CD14-positive monocyte (primary cell): ENCODE measurements at regions of chr4 and their contacts with region 1.

Region 1: GRCh38 chr4:25234390-25235370 is 847 bp downstream of the PI4K2B start:
- DNase-seq: peak; percentile 69 to 87 (median 81)
- H3K4me3 ChIP-seq: peak overlapping the region; percentile 82 to 99 (median 84)
- H3K4me3 Mint-ChIP-seq: peak overlapping the region; percentile 87 to 95
- H3K27ac ChIP-seq: peak overlapping the region; percentile 75 to 92
- H3K27ac Mint-ChIP-seq: peak overlapping the region; percentile 74 to 97 (median 92)
- H3K4me1 ChIP-seq: peaks cover 18 to 35% of the 10 kb centered on the region in 2 donors
- H3K4me1 Mint-ChIP-seq: peaks cover 28% of the 10 kb centered on the region
- H3K27me3 ChIP-seq: no peaks in the 10 kb centered on the region
- H3K27me3 Mint-ChIP-seq: peaks cover 0 to 5% (median under 1%) of the 10 kb centered on the region in 3 donors
- CTCF ChIP-seq: peak; percentile 74

Region 2: GRCh38 chr4:24584175-24584850 is 650.4 kb before region 1 on chr4 and contains the start of gene DHX15:
- intact Hi-C with region 1: loop called in 1 of 2 experiments (anchors 5 kb)
- DNase-seq: peak; percentile 98 to 99 (median 99)
- H3K4me3 ChIP-seq: peak within 1 kb of the TSS; percentile 80 to 88 (median 83)
- H3K4me3 Mint-ChIP-seq: peak within 1 kb of the TSS; percentile 96 to 99
- H3K27ac ChIP-seq: peak within 1 kb of the TSS; percentile 77 to 97
- H3K27ac Mint-ChIP-seq: peak within 1 kb of the TSS; percentile 91 to 99 (median 96)
- H3K4me1 ChIP-seq: peaks cover 19 to 26% of the 10 kb centered on the region in 2 donors
- H3K4me1 Mint-ChIP-seq: peaks cover 33% of the 10 kb centered on the region
- H3K27me3 ChIP-seq: no peaks in the 10 kb centered on the region
- H3K27me3 Mint-ChIP-seq: no peaks in the 10 kb centered on the region
- CTCF ChIP-seq: no peak
- polyA plus RNA-seq, gene DHX15: 27.2 to 77.7 (median 37.5) TPM

Region 3: DNA sequence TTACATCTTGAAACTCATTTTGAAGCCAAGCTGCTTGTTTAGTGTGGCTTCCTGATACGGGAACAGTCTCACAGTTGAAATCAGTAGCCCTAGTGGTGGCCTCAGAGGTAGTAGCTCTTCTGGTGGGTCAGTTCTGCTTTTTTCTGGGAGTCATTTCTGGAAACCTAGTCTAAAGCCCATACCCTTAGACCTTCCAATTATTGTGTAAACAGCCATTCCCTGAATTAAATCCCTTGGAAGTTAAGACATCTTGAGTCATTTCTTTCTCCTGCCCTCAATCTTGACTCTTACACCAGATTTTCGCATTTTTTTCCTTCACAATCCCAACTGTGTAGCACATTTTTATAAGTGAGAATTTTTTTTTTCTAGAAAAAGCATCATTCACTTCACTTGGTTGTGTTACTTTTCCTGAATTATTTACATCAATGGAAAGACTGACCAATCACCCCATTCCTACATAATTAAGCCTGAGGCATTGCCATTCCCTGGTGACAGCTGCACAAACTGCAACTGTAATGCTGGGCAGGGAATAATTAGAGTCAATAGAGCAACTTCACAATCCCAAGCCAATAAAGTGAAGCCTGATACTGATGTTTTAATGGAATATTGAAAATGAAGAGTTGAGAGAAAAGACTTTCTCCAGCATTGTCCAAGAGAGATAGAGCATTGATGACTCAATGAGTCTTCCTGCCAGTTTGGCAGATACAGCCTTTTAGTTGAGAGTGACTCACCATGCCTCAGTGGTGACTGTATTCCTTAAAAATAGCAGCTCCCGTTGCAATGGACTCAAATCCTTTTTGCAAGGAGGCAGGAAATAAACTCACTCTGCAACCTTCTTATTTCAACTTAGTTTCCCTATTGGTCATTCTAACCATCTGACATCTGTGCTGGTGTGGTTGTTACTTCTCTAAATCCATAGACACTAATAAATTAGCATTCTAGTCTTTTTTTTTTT is 61.4 kb before region 1 on chr4:
- intact Hi-C with region 1: loop called in 1 of 2 experiments (anchors 5 kb)
- DNase-seq: peak; percentile 75 to 94 (median 85)
- H3K4me3 ChIP-seq: peak overlapping the region in 1 of 3 experiments; percentile 47
- H3K4me3 Mint-ChIP-seq: peak overlapping the region in 1 of 2 donors; percentile 30
- H3K27ac ChIP-seq: peak overlapping the region in 1 of 2 donors; percentile 71
- H3K27ac Mint-ChIP-seq: peak overlapping the region; percentile 34 to 86 (median 78)
- H3K4me1 ChIP-seq: peaks cover 22 to 26% of the 10 kb centered on the region in 2 donors
- H3K4me1 Mint-ChIP-seq: peaks cover 22% of the 10 kb centered on the region
- H3K27me3 ChIP-seq: no peaks in the 10 kb centered on the region
- H3K27me3 Mint-ChIP-seq: peaks cover 0 to 1% (median 0%) of the 10 kb centered on the region in 3 donors
- CTCF ChIP-seq: peak; percentile 36

Region 4: GRCh38 chr4:25280210-25280609 is 45.5 kb after region 1 on chr4:
- intact Hi-C with region 1: no loop called
- DNase-seq: no peak
- H3K4me3 ChIP-seq: no peak overlapping the region
- H3K4me3 Mint-ChIP-seq: no peak overlapping the region
- H3K27ac ChIP-seq: no peak overlapping the region
- H3K27ac Mint-ChIP-seq: no peak overlapping the region
- H3K4me1 ChIP-seq: no peaks in the 10 kb centered on the region
- H3K4me1 Mint-ChIP-seq: no peaks in the 10 kb centered on the region
- H3K27me3 ChIP-seq: no peaks in the 10 kb centered on the region
- H3K27me3 Mint-ChIP-seq: peaks cover 0 to 2% (median 2%) of the 10 kb centered on the region in 3 donors
- CTCF ChIP-seq: no peak

Region 5: DNA sequence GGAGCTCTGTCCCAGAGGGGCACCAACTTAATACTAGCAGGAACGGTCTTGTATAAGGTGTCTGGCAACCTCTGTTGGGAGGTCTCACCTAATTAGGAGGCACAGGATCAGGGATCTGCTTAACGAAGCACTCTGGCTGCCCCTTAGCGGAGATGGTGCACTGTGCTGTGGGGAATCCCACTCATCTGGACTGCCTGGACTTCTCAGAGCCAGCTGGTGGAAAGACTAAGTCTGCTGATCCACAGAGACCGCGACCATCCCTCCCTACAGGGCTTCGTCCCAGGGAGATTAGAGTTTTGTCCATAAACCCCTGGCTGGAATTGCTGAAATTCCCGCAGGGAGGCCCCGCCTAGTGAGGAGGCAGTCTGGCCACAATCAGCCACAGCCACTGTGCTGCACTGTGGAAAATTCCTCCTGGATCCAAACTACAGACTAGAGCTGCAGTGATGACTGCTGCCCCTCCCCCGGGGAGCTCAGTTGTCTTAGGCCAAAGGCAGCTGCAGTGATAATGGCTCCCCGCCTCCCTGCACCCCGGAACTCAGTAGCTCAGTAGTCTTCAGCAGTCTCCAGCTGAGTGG is 55.9 kb after region 1 on chr4:
- intact Hi-C with region 1: no loop called
- DNase-seq: no peak
- H3K4me3 ChIP-seq: no peak overlapping the region
- H3K4me3 Mint-ChIP-seq: no peak overlapping the region
- H3K27ac ChIP-seq: no peak overlapping the region
- H3K27ac Mint-ChIP-seq: no peak overlapping the region
- H3K4me1 ChIP-seq: no peaks in the 10 kb centered on the region
- H3K4me1 Mint-ChIP-seq: no peaks in the 10 kb centered on the region
- H3K27me3 ChIP-seq: no peaks in the 10 kb centered on the region
- H3K27me3 Mint-ChIP-seq: peaks cover 5 to 10% (median 6%) of the 10 kb centered on the region in 3 donors
- CTCF ChIP-seq: no peak